ENCODE measurements at regions of chr6 and their contacts with region 1.

Region 1: DNA sequence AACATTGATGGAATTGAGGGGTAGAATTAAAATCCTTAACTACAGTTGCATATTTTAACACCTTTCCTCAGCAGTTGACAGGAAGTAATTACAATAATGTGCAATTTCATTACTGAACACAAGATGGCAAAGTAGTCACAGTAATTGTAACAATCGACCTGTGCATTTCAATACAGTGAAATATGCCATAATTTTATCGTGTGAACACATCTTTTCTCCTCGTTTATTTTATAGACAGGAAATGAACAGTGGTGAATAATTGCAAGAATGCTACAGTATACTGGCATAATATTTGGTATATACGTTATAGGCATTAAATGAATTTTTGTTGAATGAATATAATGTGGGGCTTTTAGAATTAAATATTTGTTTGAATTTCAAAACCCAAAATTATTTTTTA is 25.0 kb downstream of the CYB5R4 start:
- DNase-seq: no peak
- ATAC-seq: peak; percentile 64 to 89 (median 84)
- H3K4me3 ChIP-seq: no peak overlapping the region
- H3K27ac ChIP-seq: no peak overlapping the region
- H3K4me1 ChIP-seq: peaks cover 0 to 5% (median 0%) of the 10 kb centered on the region in 3 donors
- H3K27me3 ChIP-seq: no peaks in the 10 kb centered on the region
- CTCF ChIP-seq: peak; percentile 10 to 61 (median 34)

Region 2: DNA sequence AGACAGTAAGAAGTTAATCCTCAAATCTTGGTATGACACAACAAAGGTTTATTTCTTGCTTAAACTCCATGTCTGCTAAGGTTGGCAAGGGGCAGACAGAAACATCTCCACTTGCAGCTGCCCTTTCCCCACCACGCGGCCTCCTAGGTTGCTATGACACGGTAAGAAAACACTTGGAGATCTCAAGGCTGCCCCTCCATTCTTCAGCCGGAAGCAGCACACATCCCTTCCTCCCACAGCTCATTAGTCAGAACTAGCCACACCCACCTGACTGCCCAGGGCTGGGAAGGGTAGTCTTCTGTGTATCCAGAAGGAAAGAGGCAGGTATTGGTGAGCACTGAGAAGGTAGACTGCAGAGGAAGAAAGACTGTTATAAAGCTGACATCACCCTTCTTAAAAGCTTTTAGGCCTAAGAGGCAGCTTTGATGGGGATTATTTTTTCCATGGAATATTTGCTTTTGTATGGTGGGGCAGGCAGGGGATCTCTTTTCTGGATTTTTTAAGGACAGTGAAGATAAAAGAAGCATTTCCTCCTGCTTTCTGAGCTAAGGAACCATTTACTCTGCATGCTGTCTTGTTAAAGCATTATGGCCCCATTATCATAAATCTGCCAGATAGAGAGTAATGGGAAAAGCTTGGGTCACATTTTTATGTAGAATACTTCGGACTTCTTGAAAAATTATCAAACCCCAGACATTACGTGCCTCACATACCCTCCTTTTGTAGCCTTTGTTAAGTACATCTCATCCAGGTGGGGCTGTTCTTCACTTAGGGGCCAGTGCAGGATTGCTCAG is 190.7 kb after region 1 on chr6:
- intact Hi-C with region 1: no loop called
- DNase-seq: no peak
- ATAC-seq: peak in 2 of 4 donors; percentile 37 to 61
- H3K4me3 ChIP-seq: no peak overlapping the region
- H3K27ac ChIP-seq: no peak overlapping the region
- H3K4me1 ChIP-seq: no peaks in the 10 kb centered on the region
- H3K27me3 ChIP-seq: no peaks in the 10 kb centered on the region
- CTCF ChIP-seq: no peak

Region 3: DNA sequence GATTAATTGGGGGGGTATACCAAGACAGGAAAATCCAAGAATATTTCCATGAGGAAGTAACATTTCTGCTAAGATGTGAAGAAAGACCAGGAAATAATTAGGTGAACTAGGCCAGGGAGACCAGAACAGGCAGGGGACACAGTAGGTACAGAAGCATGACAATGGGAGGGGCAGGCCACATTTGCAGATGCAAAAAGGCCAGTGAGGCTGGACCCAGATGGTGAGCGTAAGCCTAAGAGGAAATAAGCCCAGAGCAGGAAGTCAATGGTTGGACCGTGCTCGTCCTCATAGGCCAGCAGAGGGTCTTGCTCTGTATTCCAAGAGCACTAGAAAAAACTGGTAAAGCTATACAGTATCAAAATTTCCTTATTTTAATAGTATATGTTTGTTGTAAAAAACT is 333.6 kb after region 1 on chr6:
- intact Hi-C with region 1: loop called in 2 of 3 experiments (anchors 10 kb)
- DNase-seq: no peak
- ATAC-seq: no peak
- H3K4me3 ChIP-seq: no peak overlapping the region
- H3K27ac ChIP-seq: no peak overlapping the region
- H3K4me1 ChIP-seq: no peaks in the 10 kb centered on the region
- H3K27me3 ChIP-seq: no peaks in the 10 kb centered on the region
- CTCF ChIP-seq: no peak

Region 4: GRCh38 chr6:84227434-84228197 is 343.1 kb after region 1 on chr6 and contains the start of gene CEP162:
- intact Hi-C with region 1: loop called in 1 of 3 experiments (anchors 10 kb)
- DNase-seq: peak; percentile 84 to 93 (median 88)
- ATAC-seq: peak; percentile 96 to 98 (median 98)
- H3K4me3 ChIP-seq: peak within 1 kb of the TSS; percentile 73 to 91 (median 86)
- H3K27ac ChIP-seq: peak within 1 kb of the TSS; percentile 53 to 87 (median 78)
- H3K4me1 ChIP-seq: peaks cover 0 to 5% (median 0%) of the 10 kb centered on the region in 3 donors
- H3K27me3 ChIP-seq: peaks cover 0 to 4% (median 0%) of the 10 kb centered on the region in 4 donors
- CTCF ChIP-seq: peak in 3 of 4 donors; percentile 29 to 47 (median 43)
- total RNA-seq, gene CEP162: 2.2 to 8.5 (median 4.7) TPM

Region 5: GRCh38 chr6:84897988-84898594 is 1013.6 kb after region 1 on chr6:
- intact Hi-C with region 1: no loop called
- DNase-seq: no peak
- ATAC-seq: no peak
- H3K4me3 ChIP-seq: no peak overlapping the region
- H3K27ac ChIP-seq: no peak overlapping the region
- H3K4me1 ChIP-seq: peaks cover 0 to 10% (median 7%) of the 10 kb centered on the region in 3 donors
- H3K27me3 ChIP-seq: no peaks in the 10 kb centered on the region
- CTCF ChIP-seq: no peak

Measured in pancreas (tissue), 10 donors.